ENCODE measurements at regions of chr15 and their contacts with region 1.

Region 1: GRCh38 chr15:100141311-100142001 is 200.3 kb downstream of the ADAMTS17 start:
- DNase-seq: peak in 4 of 10 donors; percentile 27 to 86 (median 80)

Region 2: GRCh38 chr15:100211855-100212850 is 70.7 kb after region 1 on chr15:
- intact Hi-C with region 1: no loop called
- DNase-seq: no peak

Region 3: GRCh38 chr15:100308213-100308600 is 166.8 kb after region 1 on chr15:
- intact Hi-C with region 1: loop called (anchors 10 kb)
- DNase-seq: no peak